Activated CD8-positive, alpha-beta T cell treated with anti-CD3 and anti-CD28 coated beads for 36 hours (primary cell): ENCODE measurements at regions of chr9 and their contacts with region 1.

Region 1: DNA sequence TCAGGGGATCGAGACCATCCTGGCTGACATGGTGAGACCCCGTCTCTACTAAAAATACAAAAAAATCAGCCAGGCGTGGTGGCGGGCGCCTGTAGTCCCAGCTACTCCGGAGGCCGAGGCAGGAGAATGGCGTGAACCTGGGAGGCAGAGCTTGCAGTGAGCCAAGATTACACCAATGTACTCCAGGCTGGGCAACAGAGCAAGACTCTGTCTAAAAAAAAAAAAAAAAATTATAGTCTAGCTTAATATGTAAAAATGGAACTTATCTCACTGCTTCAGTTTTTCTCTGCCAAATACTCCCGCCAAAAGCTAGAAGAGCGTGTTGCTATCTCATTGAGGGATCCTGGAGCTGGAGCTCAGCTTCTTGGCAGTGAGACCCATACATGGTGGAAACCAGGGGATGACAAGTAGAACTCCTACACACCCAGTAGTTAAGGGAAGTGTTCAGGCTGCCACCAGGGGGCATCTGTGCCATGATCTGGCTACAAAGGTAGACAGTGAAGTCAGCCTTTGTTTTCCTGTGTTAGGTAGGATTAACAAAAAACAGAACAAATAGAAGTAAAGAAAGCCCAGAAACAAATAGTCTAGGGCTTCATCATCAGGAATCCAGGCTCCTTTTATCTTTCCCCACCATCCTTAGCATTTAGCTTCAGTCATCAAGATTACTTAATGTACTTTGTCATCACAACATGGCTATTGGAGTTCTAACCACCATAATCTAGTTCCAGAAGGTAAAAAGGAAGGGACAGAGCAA is 33.6 kb upstream of the GLIPR2 start:
- DNase-seq: peak; percentile 92
- ATAC-seq: peak; percentile 99
- H3K4me3 Mint-ChIP-seq: no peak overlapping the region
- H3K27ac Mint-ChIP-seq: no peak overlapping the region
- H3K4me1 Mint-ChIP-seq: peaks cover 8% of the 10 kb centered on the region
- H3K27me3 Mint-ChIP-seq: no peaks in the 10 kb centered on the region
- CTCF ChIP-seq: peak; percentile 92

Region 2: GRCh38 chr9:36008774-36009300 is 94.1 kb before region 1 on chr9:
- CTCF ChIA-PET with region 1: interaction called, 25 read pairs
- POLR2A ChIA-PET with region 1: no interaction called
- intact Hi-C with region 1: no loop called
- DNase-seq: peak; percentile 83
- ATAC-seq: peak; percentile 99
- H3K4me3 Mint-ChIP-seq: no peak overlapping the region
- H3K27ac Mint-ChIP-seq: no peak overlapping the region
- H3K4me1 Mint-ChIP-seq: peaks cover 13% of the 10 kb centered on the region
- H3K27me3 Mint-ChIP-seq: peaks cover 28% of the 10 kb centered on the region
- CTCF ChIP-seq: peak; percentile 99

Region 3: DNA sequence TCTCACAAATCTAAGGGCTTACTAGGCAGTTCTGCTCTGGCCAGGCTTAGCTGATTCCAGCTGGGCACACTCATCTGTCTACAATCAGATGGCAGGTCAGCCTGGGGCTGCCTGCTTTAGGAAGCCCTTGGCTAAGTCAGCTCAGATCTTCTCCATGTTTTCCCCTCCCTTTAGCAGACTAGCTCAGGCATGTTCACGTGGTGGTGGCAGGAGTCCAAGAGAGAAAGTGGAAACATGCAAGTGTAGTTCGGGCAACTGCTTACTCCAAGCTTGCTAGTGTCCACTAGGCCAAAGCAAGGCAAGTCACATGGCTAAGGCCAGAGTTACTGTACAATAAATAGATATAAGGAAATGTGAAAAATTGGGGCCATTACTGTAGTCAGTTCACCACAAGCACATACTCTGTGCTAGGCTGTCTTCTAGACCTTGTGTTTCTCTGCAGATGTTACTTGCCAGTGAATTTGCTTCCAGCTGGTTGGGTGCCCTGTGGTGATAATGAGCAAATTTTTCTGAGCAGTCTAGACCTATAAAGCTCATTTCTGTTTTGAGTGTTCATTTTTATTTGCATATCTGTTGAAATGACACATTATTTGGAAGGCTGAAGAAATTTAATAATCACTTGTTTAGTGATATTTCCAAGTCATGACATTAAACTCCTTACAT is 27.9 kb before region 1 on chr9:
- CTCF ChIA-PET with region 1: interaction called, 14 read pairs
- POLR2A ChIA-PET with region 1: no interaction called
- intact Hi-C with region 1: no loop called
- DNase-seq: no peak
- ATAC-seq: no peak
- H3K4me3 Mint-ChIP-seq: no peak overlapping the region
- H3K27ac Mint-ChIP-seq: no peak overlapping the region
- H3K4me1 Mint-ChIP-seq: no peaks in the 10 kb centered on the region
- H3K27me3 Mint-ChIP-seq: no peaks in the 10 kb centered on the region
- CTCF ChIP-seq: no peak

Region 4: GRCh38 chr9:36136272-36136893 is 33.5 kb after region 1 on chr9 and contains the start of gene GLIPR2:
- CTCF ChIA-PET with region 1: interaction called, 14 read pairs
- POLR2A ChIA-PET with region 1: interaction called, 5 read pairs
- intact Hi-C with region 1: no loop called
- DNase-seq: peak; percentile 82
- ATAC-seq: peak; percentile 96
- H3K4me3 Mint-ChIP-seq: peak within 1 kb of the TSS; percentile 85
- H3K27ac Mint-ChIP-seq: peak within 1 kb of the TSS; percentile 68
- H3K4me1 Mint-ChIP-seq: peaks cover 43% of the 10 kb centered on the region
- H3K27me3 Mint-ChIP-seq: no peaks in the 10 kb centered on the region
- CTCF ChIP-seq: peak; percentile 33
- total RNA-seq, gene GLIPR2: 12.2 to 13.6 TPM

Region 5: GRCh38 chr9:36154331-36154952 is 51.5 kb after region 1 on chr9:
- CTCF ChIA-PET with region 1: interaction called, 20 read pairs
- POLR2A ChIA-PET with region 1: interaction called, 3 read pairs
- intact Hi-C with region 1: no loop called
- DNase-seq: no peak
- ATAC-seq: no peak
- H3K4me3 Mint-ChIP-seq: no peak overlapping the region
- H3K27ac Mint-ChIP-seq: no peak overlapping the region
- H3K4me1 Mint-ChIP-seq: peaks cover 46% of the 10 kb centered on the region
- H3K27me3 Mint-ChIP-seq: no peaks in the 10 kb centered on the region
- CTCF ChIP-seq: no peak

Region 6: DNA sequence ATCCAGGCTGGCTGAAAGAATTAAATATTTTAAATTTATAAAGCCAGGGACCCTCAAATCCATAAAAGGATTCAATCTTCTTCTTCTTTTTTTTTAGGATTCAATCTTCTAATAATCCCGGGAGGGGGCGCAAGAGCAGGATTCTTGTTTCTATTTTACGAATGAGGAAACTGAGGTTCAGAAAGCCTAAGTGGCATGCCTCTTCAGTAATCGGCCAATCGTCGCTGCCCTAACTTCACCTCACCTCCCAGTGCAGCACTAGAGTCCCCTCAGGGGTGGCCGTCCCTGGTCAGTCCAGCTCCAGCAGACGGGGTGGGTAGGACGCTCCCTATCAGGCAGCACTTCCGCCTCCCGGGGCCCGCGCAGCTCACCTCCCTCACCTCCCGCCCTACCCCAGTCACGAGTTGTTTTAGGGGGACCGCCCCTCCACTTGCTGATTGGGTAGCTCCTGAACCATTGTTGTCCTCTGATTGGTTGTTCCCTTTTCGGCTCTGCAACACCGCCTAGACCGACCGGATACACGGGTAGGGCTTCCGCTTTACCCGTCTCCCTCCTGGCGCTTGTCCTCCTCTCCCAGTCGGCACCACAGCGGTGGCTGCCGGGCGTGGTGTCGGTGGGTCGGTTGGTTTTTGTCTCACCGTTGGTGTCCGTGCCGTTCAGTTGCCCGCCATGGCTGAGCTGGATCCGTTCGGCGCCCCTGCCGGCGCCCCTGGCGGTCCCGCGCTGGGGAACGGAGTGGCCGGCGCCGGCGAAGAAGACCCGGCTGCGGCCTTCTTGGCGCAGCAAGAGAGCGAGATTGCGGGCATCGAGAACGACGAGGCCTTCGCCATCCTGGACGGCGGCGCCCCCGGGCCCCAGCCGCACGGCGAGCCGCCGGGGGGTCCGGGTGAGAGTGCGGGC is 87.7 kb after region 1 on chr9 and contains the start of gene CLTA:
- CTCF ChIA-PET with region 1: interaction called, 69 read pairs
- POLR2A ChIA-PET with region 1: interaction called, 4 read pairs
- intact Hi-C with region 1: no loop called
- DNase-seq: peak; percentile 97
- ATAC-seq: peak; percentile 99
- H3K4me3 Mint-ChIP-seq: peak within 1 kb of the TSS; percentile 94
- H3K27ac Mint-ChIP-seq: peak within 1 kb of the TSS; percentile 90
- H3K4me1 Mint-ChIP-seq: peaks cover 40% of the 10 kb centered on the region
- H3K27me3 Mint-ChIP-seq: no peaks in the 10 kb centered on the region
- CTCF ChIP-seq: peak; percentile 52
- total RNA-seq, gene CLTA: 116 to 119 TPM

Region 7: DNA sequence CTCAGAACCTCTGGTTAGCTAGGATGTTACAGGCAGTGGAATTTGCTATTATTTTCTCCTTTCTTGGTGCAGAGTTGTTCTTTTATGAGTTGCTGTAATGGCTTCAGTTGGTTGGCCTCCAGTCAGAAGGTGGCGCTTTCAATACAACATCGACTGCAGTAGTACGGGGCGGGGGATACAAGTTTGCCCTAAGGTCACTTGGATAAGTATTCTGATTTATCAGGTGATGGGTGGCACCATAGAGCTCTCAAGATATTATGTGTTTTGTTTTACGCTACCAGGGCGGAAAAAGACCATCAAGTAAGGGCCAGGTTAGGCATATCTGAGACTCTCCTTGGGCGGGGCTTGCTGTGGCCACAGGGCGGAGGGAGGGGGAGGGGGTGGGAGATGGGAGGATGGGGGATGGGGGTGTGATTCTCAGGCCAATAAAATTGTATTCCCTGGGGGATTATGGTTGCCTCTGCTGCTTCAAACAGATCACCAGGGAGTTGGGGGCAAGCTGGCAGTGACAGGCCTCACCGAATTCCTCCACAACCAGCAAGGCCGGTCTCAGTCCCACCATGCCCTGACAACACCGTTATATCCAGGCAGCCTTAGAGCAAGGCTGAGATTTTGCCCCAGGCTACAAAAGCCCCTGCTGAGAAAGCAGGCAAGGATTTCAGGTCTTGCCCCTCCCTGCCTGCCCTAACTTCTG is 313.1 kb after region 1 on chr9:
- CTCF ChIA-PET with region 1: no interaction called
- POLR2A ChIA-PET with region 1: no interaction called
- intact Hi-C with region 1: no loop called
- DNase-seq: no peak
- ATAC-seq: no peak
- H3K4me3 Mint-ChIP-seq: no peak overlapping the region
- H3K27ac Mint-ChIP-seq: no peak overlapping the region
- H3K4me1 Mint-ChIP-seq: peaks cover 9% of the 10 kb centered on the region
- H3K27me3 Mint-ChIP-seq: no peaks in the 10 kb centered on the region
- CTCF ChIP-seq: no peak